GM12878 (cell line): ENCODE measurements at regions of chr22 and their contacts with region 1.

Region 1: GRCh38 chr22:42437488-42438292 is 5.5 kb upstream of the NFAM1 start:
- DNase-seq: peak; percentile 84
- ATAC-seq: peak; percentile 76
- H3K4me3 ChIP-seq: peak overlapping the region; percentile 78
- H3K27ac ChIP-seq: peak overlapping the region; percentile 81
- H3K4me1 ChIP-seq: peaks cover 13% of the 10 kb centered on the region
- H3K27me3 ChIP-seq: no peaks in the 10 kb centered on the region
- CTCF ChIP-seq: peak; percentile 92 to 98 (median 98)
- EP300 ChIP-seq: peak; percentile 61 to 71; a peak in 2 of 4 replicates
- POLR2A ChIP-seq: no peak
- RAD21 ChIP-seq: peak; percentile 97

Region 2: DNA sequence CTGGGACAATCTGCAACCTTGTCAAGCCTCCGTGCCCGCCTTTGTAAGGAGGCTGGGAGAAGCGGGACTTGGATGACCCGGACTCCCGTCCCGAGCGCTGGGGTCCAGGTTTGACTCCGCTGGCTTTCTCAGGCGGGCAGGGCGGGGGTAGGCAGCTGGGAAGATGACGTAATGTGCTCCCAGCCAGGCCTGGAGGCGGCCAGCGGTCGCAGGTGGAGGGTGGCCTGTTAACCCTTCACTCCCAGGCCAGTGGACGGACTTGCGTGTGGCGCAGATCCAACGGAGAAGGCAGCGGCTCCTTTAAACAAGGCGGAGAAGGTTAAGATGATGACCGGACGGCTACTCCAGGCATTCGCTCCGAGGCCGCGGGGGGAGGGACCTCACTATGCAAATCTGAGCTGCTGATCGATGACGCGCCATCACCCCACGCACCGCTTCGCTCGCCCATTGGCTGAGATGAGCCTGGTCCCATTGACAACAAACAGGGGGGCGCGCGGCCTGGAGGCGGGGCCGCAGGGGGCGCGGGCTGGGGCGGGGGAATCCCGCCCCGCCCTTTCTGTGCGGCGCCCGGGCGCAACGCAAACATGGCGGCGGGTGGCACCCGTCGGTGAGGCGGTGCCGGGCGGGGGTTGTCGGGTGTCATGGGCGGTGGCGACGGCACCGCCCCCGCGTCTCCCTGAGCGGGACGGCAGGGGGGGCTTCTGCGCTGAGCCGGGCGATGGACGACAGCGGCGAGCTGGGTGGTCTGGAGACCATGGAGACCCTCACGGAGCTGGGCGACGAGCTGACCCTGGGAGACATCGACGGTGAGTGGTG is 604.9 kb before region 1 on chr22 and contains the start of gene SREBF2:
- CTCF ChIA-PET with region 1: no interaction called
- POLR2A ChIA-PET with region 1: no interaction called
- RAD21 ChIA-PET with region 1: no interaction called
- SMC1A ChIA-PET with region 1: interaction called, 3 read pairs
- in situ Hi-C with region 1: no loop called
- intact Hi-C with region 1: loop called (anchors 2 kb)
- DNase-seq: peak; percentile 99
- ATAC-seq: peak; percentile 92
- H3K4me3 ChIP-seq: peak within 1 kb of the TSS; percentile 92
- H3K27ac ChIP-seq: peak within 1 kb of the TSS; percentile 95
- H3K4me1 ChIP-seq: peaks cover 12% of the 10 kb centered on the region
- H3K27me3 ChIP-seq: no peaks in the 10 kb centered on the region
- CTCF ChIP-seq: 0 out of 6 replicates have a peak, but pooled peaks of 1 of the 3 experiments have one; percentile 1
- EP300 ChIP-seq: peak; percentile 64 to 75
- POLR2A ChIP-seq: peak; percentile 94
- RAD21 ChIP-seq: no peak
- polyA plus RNA-seq, gene SREBF2: 2.4 to 3.6 TPM

Region 3: DNA sequence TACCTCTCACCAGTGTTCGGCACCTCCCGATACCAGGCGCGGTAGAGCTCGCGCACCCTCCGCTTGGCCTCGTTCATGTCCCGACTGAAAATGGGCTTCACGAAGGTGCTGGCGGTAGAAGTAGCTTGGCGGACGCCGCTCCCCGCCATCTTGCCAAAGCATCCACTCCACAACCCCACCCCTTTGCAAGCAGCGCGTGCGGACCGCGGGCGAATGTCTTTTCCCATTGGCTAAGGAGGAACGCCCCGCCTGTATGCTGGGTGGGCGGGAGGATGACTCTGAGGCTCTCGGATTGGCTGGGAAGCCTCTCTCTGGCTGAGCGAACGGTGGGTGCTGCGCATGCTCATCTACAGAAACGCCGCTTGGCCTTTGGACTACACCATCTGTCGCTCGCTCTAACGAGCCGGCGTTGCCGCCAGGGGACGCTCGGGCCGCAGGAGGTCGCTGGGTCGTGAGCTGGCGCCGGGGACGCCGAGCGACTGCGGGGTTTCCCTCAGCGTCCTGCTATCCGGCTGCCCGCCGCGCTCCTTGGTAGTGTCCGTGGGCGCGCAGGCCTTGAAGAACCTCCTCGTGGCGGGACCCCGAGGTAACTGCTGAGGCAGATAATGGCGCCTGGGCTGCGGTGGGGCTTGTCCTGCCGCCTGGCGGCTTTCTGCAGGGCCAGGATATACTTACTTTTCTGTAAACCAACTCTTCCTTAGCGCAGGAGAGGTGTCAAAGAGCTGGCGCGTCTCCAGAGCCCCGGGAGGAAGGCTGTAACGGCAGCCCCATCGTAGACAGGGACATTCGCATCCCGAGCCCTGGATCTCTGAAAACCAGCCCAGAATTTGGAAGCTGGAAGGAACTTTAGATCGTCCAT is 346.9 kb before region 1 on chr22 and contains the start of gene NDUFA6:
- CTCF ChIA-PET with region 1: interaction called, 23 read pairs
- POLR2A ChIA-PET with region 1: interaction called, 19 read pairs
- RAD21 ChIA-PET with region 1: interaction called, 25 read pairs
- SMC1A ChIA-PET with region 1: interaction called, 21 read pairs
- in situ Hi-C with region 1: no loop called
- intact Hi-C with region 1: loop called (anchors 1 kb)
- DNase-seq: peak; percentile 99
- ATAC-seq: peak; percentile 95
- H3K4me3 ChIP-seq: peak within 1 kb of the TSS; percentile 82
- H3K27ac ChIP-seq: peak within 1 kb of the TSS; percentile 87
- H3K4me1 ChIP-seq: 0 out of 2 replicates have a peak, but pooled peaks cover 3% of the 10 kb centered on the region
- H3K27me3 ChIP-seq: no peaks in the 10 kb centered on the region
- CTCF ChIP-seq: peak; percentile 95 to 99 (median 96); a peak in 5 of 6 replicates
- EP300 ChIP-seq: no peak
- POLR2A ChIP-seq: peak; percentile 98
- RAD21 ChIP-seq: peak; percentile 84
- polyA plus RNA-seq, gene NDUFA6: 473 to 511 TPM

Region 4: DNA sequence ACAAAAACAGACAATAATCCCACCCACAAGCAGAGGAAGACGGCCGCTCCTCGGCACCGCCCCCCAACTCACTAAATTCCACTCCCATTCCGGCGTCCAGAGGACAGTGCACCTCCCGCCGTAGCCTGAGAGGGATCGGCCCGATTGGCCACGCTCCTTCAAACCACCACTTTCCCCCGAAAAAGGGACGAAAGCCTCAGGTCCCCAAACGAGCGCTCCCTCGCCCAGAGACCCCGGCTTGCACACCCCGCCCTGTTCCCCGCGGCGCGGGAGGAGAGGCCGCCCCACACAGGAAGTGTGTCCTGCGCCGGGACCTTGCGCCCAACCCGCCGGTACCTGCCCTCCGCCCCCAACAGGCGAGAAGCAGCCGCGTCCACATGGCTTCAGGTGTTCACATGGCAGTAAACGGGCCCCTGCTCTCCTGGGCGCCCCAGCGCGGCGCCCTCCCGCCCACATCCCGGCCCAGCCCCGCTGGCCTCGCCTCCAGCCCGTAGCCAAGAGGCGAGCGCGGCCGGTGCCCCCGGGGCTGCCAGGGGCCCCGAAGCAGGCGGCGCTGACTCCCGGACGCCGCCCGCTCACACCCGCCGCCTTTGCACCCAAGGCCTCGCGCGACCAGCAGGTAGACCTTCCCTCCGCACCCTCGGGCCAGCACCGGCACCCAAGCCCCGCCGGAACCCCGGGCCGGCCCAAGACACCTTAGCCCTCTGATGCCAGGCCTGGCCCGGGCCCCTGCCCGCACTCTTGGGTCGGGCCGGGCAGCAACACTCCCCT is 168.1 kb before region 1 on chr22:
- CTCF ChIA-PET with region 1: no interaction called
- POLR2A ChIA-PET with region 1: interaction called, 5 read pairs
- RAD21 ChIA-PET with region 1: no interaction called
- SMC1A ChIA-PET with region 1: interaction called, 4 read pairs
- in situ Hi-C with region 1: no loop called
- intact Hi-C with region 1: loop called (anchors 2 kb)
- DNase-seq: no peak
- ATAC-seq: peak; percentile 88
- H3K4me3 ChIP-seq: peak overlapping the region; percentile 97
- H3K27ac ChIP-seq: peak overlapping the region; percentile 81
- H3K4me1 ChIP-seq: peaks cover 8% of the 10 kb centered on the region; the same call in 1 of the 2 replicates
- H3K27me3 ChIP-seq: no peaks in the 10 kb centered on the region
- CTCF ChIP-seq: peak in 2 of 3 experiments; percentile 24 to 36; a peak in 2 of 6 replicates
- EP300 ChIP-seq: no peak
- POLR2A ChIP-seq: peak; percentile 83
- RAD21 ChIP-seq: 0 out of 2 replicates have a peak, but pooled peaks have one; percentile 10

Region 5: GRCh38 chr22:42396621-42397331 is 40.9 kb before region 1 on chr22:
- CTCF ChIA-PET with region 1: interaction called, 11 read pairs
- POLR2A ChIA-PET with region 1: interaction called, 7 read pairs
- RAD21 ChIA-PET with region 1: interaction called, 10 read pairs
- SMC1A ChIA-PET with region 1: interaction called, 13 read pairs
- in situ Hi-C with region 1: no loop called
- intact Hi-C with region 1: no loop called
- DNase-seq: no peak
- ATAC-seq: peak; percentile 77
- H3K4me3 ChIP-seq: peak overlapping the region; percentile 41; the same call in 1 of the 2 replicates
- H3K27ac ChIP-seq: peak overlapping the region; percentile 15; the same call in 1 of the 2 replicates
- H3K4me1 ChIP-seq: peaks cover 16% of the 10 kb centered on the region
- H3K27me3 ChIP-seq: no peaks in the 10 kb centered on the region; a peak in 1 of 4 replicates
- CTCF ChIP-seq: peak; percentile 11 to 23 (median 18); a peak in 4 of 6 replicates
- EP300 ChIP-seq: no peak
- POLR2A ChIP-seq: no peak
- RAD21 ChIP-seq: no peak

Region 6: DNA sequence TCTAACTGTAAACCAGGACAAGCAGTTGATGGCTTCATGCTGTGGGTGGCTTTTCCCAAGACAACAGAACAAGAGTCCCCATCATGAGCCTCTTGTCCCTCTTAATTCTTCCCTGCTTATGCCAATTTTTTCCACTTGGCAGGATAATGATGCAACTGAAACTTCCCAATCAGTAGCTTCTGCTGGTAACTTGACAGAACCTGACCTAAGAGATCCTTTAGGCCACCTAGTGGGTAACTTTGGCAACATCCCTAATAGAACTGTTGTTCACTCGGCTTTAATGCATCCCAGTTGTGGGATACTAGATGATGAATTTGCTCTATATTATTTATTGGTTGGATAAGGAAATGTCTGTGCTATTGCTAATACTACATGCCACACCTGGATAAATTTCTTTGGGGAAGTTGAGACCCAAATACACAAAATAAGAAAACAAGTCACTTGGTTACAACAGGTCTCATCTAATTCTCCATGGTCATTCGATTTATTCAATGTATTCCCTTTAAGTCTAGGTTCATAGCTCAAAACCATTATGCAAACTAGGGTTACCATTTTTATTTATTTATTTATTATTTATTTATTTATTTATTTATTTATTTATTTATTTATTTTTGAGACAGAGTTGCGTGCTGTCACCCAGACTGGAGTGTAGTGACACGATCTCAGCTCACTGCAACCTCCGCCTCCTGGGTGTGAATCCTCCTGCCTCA is 35.9 kb after region 1 on chr22:
- CTCF ChIA-PET with region 1: interaction called, 17 read pairs
- POLR2A ChIA-PET with region 1: interaction called, 3 read pairs
- RAD21 ChIA-PET with region 1: interaction called, 20 read pairs
- SMC1A ChIA-PET with region 1: interaction called, 10 read pairs
- in situ Hi-C with region 1: no loop called
- intact Hi-C with region 1: no loop called
- DNase-seq: no peak
- ATAC-seq: peak; percentile 89
- H3K4me3 ChIP-seq: no peak overlapping the region
- H3K27ac ChIP-seq: no peak overlapping the region
- H3K4me1 ChIP-seq: no peaks in the 10 kb centered on the region
- H3K27me3 ChIP-seq: 0 out of 4 replicates have a peak, but pooled peaks cover 1 to 3% of the 10 kb centered on the region in 2 experiments
- CTCF ChIP-seq: peak; percentile 67 to 73 (median 70)
- EP300 ChIP-seq: no peak
- POLR2A ChIP-seq: no peak
- RAD21 ChIP-seq: peak; percentile 68